B cell (primary cell): ENCODE measurements at regions of chr14 and their contacts with region 1.

Region 1: GRCh38 chr14:76710056-76711010 is 50.9 kb upstream of the VASH1 start:
- DNase-seq: peak; percentile 49
- ATAC-seq: no peak
- H3K4me3 ChIP-seq: no peak overlapping the region
- H3K4me3 Mint-ChIP-seq: no peak overlapping the region
- H3K27ac ChIP-seq: no peak overlapping the region
- H3K27ac Mint-ChIP-seq: no peak overlapping the region
- H3K4me1 ChIP-seq: peaks cover 0 to under 1% of the 10 kb centered on the region in 2 donors
- H3K4me1 Mint-ChIP-seq: no peaks in the 10 kb centered on the region
- H3K27me3 ChIP-seq: no peaks in the 10 kb centered on the region
- H3K27me3 Mint-ChIP-seq: peaks cover 15% of the 10 kb centered on the region
- CTCF ChIP-seq: peak; percentile 81

Region 2: DNA sequence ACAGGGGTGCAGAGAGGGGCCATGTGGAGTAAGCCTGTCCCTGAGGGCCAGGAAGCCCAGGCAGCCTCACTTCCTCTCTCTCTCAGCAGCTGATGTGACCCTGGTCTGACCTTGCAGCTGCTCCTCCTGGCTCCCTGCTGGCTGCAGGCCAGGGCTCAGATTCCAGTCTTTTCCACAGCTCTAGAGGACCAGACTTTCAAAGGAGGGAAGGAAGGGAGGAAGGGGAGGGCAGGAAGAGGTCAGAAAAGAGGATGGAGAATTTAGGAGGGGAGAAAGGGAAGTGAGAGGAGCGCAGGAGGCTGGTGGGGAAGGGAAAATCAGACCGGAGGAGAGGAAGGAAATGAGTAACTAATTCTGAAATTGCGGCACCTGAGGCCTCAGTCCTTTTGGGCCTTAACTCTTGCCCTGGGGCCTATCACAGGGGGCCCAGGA is 10.1 kb after region 1 on chr14:
- CTCF ChIA-PET with region 1: interaction called, 15 read pairs
- POLR2A ChIA-PET with region 1: no interaction called
- intact Hi-C with region 1: no loop called
- DNase-seq: no peak
- ATAC-seq: peak; percentile 21
- H3K4me3 ChIP-seq: no peak overlapping the region
- H3K4me3 Mint-ChIP-seq: peak overlapping the region; percentile 26
- H3K27ac ChIP-seq: peak overlapping the region in 1 of 2 donors; percentile 71
- H3K27ac Mint-ChIP-seq: peak overlapping the region; percentile 47
- H3K4me1 ChIP-seq: peaks cover 0 to 31% of the 10 kb centered on the region in 2 donors
- H3K4me1 Mint-ChIP-seq: peaks cover 21% of the 10 kb centered on the region
- H3K27me3 ChIP-seq: no peaks in the 10 kb centered on the region
- H3K27me3 Mint-ChIP-seq: no peaks in the 10 kb centered on the region
- CTCF ChIP-seq: no peak

Region 3: DNA sequence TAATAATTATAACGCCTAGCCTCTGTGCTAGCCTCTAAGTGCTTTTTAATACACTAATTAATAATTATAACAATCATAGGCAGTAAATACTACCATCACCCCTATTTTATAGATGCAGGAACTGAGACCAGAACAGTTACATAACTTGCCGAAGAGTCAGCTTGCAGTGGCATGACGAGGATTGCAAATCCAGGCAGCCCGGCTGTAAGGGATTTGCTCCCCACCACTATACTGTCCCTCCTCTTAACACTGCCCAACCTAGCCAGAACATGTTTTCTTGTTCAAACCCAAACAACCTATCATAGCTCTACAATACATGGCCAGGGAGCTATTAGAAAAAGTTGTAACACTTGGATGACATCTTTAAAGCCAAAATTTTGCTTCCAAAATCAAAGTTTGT is 17.1 kb after region 1 on chr14:
- CTCF ChIA-PET with region 1: interaction called, 17 read pairs
- POLR2A ChIA-PET with region 1: no interaction called
- intact Hi-C with region 1: no loop called
- DNase-seq: no peak
- ATAC-seq: no peak
- H3K4me3 ChIP-seq: no peak overlapping the region
- H3K4me3 Mint-ChIP-seq: no peak overlapping the region
- H3K27ac ChIP-seq: peak overlapping the region in 1 of 2 donors; percentile 16
- H3K27ac Mint-ChIP-seq: no peak overlapping the region
- H3K4me1 ChIP-seq: no peaks in the 10 kb centered on the region
- H3K4me1 Mint-ChIP-seq: peaks cover 8% of the 10 kb centered on the region
- H3K27me3 ChIP-seq: no peaks in the 10 kb centered on the region
- H3K27me3 Mint-ChIP-seq: peaks cover 24% of the 10 kb centered on the region
- CTCF ChIP-seq: no peak

Region 4: GRCh38 chr14:76784266-76785264 is 74.2 kb after region 1 on chr14:
- CTCF ChIA-PET with region 1: interaction called, 35 read pairs
- POLR2A ChIA-PET with region 1: no interaction called
- intact Hi-C with region 1: loop called (anchors 1 kb)
- DNase-seq: peak; percentile 51
- ATAC-seq: peak; percentile 84
- H3K4me3 ChIP-seq: no peak overlapping the region
- H3K4me3 Mint-ChIP-seq: no peak overlapping the region
- H3K27ac ChIP-seq: no peak overlapping the region
- H3K27ac Mint-ChIP-seq: no peak overlapping the region
- H3K4me1 ChIP-seq: no peaks in the 10 kb centered on the region
- H3K4me1 Mint-ChIP-seq: no peaks in the 10 kb centered on the region
- H3K27me3 ChIP-seq: no peaks in the 10 kb centered on the region
- H3K27me3 Mint-ChIP-seq: no peaks in the 10 kb centered on the region
- CTCF ChIP-seq: peak; percentile 63

Region 5: GRCh38 chr14:76812211-76813044 is 102.1 kb after region 1 on chr14 and contains the start of gene ANGEL1:
- CTCF ChIA-PET with region 1: interaction called, 26 read pairs
- POLR2A ChIA-PET with region 1: no interaction called
- intact Hi-C with region 1: no loop called
- DNase-seq: peak; percentile 99
- ATAC-seq: peak; percentile 95
- H3K4me3 ChIP-seq: peak within 1 kb of the TSS; percentile 31 to 79 (median 72)
- H3K4me3 Mint-ChIP-seq: peak within 1 kb of the TSS; percentile 90
- H3K27ac ChIP-seq: peak within 1 kb of the TSS; percentile 65 to 84
- H3K27ac Mint-ChIP-seq: peak within 1 kb of the TSS; percentile 99
- H3K4me1 ChIP-seq: peaks cover 20 to 25% of the 10 kb centered on the region in 2 donors
- H3K4me1 Mint-ChIP-seq: peaks cover 28% of the 10 kb centered on the region
- H3K27me3 ChIP-seq: peaks cover 0 to 5% (median 2%) of the 10 kb centered on the region in 4 experiments
- H3K27me3 Mint-ChIP-seq: no peaks in the 10 kb centered on the region
- CTCF ChIP-seq: no peak
- total RNA-seq, gene ANGEL1: 25.2 and 27.3 TPM in 2 replicates

Region 6: DNA sequence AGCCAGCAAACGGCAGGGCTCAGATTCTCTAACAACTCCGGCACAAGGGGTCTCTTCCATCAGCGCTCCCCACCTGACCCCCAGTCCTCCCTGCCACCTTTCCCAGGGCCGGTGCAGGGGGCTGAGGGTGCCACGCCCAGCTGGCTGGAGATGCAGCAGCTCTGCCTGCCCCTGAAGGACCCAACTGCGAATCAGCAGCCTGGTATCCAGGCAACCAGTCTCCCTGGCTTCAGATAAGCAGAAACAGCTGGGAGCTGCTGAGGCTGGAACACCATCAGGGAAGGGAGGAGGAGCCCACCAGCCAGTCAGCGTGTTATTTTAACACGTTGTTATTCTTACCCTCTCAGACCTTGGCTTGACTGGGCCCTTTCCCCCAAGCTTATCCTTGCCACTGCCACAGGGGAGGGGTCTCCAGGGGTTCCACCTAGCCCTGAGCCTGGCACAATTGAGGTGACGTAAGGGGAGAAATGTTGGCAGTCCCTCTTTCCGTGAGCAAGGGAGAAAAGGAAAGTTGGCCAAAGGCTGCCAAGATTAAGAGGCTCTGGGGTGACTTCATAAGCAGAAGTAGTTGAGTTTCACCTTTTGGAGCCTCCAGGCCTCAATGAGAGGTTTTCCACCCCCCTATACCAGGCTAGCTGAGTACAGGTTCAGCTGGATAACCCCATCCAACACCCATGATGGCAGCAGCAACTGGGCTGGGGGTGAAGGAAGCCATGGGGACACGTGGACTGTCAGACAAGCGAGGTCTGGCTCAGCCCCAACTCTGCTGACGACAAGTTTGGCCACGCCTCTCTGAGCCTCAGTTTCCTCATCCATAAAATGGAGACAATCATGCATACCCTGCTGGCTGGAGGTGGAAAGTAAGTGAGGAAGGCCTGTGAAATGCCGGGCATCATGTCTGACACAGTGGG is 227.1 kb after region 1 on chr14:
- CTCF ChIA-PET with region 1: no interaction called
- POLR2A ChIA-PET with region 1: no interaction called
- intact Hi-C with region 1: no loop called
- DNase-seq: no peak
- ATAC-seq: no peak
- H3K4me3 ChIP-seq: no peak overlapping the region
- H3K4me3 Mint-ChIP-seq: no peak overlapping the region
- H3K27ac ChIP-seq: no peak overlapping the region
- H3K27ac Mint-ChIP-seq: no peak overlapping the region
- H3K4me1 ChIP-seq: no peaks in the 10 kb centered on the region
- H3K4me1 Mint-ChIP-seq: no peaks in the 10 kb centered on the region
- H3K27me3 ChIP-seq: no peaks in the 10 kb centered on the region
- H3K27me3 Mint-ChIP-seq: no peaks in the 10 kb centered on the region
- CTCF ChIP-seq: no peak